ENCODE measurements at regions of chr1 and their contacts with region 1.

Region 1: DNA sequence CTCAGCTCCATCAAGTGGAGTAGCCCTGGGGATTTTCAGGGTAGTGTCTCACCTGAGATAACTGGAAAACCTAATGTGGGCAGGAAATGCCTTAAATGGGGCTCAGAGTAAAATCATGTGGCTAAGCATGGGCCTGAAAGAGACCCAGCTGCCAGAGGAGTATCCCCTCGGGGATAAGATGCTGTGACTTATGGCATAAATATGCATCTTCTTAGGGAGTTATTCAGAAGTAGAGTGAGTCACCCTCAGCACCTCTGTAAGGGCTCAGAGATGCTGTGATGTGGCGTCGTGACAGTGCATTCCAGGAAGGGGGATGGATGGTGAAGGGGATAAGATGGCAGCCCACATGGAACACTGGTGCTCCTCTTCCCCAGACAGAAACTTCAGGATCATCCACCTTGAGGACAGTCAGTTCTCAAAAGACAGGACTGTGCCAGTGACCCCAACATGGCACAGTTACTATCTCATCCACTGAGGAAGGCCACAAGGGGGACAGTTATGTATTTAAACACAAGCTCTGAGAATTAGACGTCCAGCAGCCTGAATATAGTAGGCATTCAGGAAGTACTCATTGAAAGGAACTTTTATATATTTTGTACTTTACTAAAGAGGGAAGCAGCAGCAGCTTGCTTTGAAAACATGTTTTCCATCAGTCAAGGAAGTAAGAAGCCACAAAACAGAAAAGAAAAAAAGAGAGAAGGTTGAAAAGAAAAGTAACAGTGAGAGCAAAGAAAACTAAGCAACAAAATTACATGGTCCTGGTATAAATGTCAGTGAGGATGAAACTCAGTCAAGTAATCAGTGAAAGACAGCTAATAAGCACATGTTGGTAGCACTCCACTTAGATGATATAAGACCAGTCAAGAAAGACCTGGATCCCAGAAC is 8.3 kb downstream of the IL24 start:
- DNase-seq: peak; percentile 88
- H3K4me3 Mint-ChIP-seq: peak overlapping the region; percentile 40
- H3K27ac Mint-ChIP-seq: peak overlapping the region; percentile 96
- H3K4me1 Mint-ChIP-seq: peaks cover 88% of the 10 kb centered on the region
- H3K27me3 Mint-ChIP-seq: no peaks in the 10 kb centered on the region

Region 2: DNA sequence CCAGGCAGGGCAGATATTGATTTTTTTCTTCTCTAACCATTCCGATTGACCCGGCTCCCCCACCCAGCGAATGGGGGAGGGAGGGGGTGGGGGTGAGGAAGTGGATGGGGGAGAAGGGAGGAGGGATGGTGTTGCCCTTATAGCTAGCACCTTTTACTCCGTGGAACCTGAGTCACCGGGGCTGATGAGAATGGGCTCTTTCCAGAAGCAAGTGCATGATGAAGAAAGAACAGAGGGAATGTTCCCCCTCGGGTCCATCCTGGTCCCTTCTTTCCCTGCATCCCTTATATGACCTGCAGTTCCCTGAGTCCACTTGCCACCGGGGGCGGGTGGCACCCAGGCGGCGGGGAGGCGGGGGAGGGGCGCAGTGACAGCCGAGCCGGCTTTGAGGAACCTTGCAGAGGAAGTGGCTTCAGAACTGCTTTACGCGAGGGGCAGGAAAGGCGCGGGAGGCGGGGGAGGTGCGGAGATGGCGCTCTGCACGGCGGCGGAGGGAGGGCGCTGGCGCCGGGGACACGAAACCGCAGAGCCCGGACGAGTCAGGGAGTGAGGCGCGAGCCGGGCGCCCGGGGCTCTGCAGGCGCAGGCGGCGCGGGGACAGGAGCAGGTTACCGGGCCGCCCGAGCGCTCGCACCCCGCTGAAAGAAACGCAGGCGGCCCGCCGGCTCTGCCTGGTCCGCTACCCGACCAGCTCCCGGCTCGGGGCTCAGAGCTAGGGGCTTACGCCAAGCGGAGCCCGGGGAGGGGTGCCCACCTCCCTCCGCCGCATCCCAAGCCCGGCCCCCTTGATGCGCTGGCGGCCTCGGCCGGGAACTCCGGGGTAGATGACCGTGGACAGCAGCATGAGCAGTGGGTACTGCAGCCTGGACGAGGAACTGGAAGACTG is 348.5 kb before region 1 on chr1:
- CTCF ChIA-PET with region 1: no interaction called
- intact Hi-C with region 1: loop called (anchors 1 kb)
- DNase-seq: peak; percentile 92
- H3K4me3 Mint-ChIP-seq: peak overlapping the region; percentile 96
- H3K27ac Mint-ChIP-seq: peak overlapping the region; percentile 100
- H3K4me1 Mint-ChIP-seq: peaks cover 61% of the 10 kb centered on the region
- H3K27me3 Mint-ChIP-seq: no peaks in the 10 kb centered on the region

Region 3: GRCh38 chr1:206890690-206891089 is 14.8 kb before region 1 on chr1:
- CTCF ChIA-PET with region 1: interaction called, 5 read pairs
- intact Hi-C with region 1: loop called (anchors 2 kb)
- DNase-seq: no peak
- H3K4me3 Mint-ChIP-seq: no peak overlapping the region
- H3K27ac Mint-ChIP-seq: peak overlapping the region; percentile 64
- H3K4me1 Mint-ChIP-seq: peaks cover 68% of the 10 kb centered on the region
- H3K27me3 Mint-ChIP-seq: peaks cover 1% of the 10 kb centered on the region

Region 4: DNA sequence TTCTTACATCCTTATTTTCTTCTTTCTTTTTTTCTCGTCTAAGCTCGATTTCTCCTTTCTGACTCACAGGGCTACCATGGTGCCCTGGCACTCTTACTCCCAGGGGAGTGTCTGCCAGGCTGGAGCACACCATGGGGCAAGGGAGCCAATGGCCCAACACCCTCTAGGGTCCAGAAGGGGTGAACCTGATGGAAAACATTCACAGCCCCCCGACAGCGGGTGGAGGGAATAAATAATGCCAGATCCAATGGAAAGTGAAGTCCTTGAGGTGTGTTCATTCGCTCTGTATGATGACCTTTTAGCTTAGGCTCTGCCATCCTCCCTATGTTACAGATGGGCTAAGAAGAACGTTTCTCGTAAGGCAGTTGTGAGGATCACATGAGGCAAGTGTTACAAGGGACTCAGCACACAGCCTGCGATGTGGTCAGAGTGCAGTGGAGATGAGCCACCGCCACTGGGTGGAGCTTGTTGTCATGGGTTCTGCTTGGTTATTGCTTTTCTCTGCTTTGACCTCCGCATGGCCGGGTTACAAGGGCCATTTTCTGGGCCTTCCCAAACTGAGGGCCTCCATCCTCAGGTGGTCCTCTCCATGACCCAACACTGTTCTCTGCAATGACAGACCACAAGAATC is 19.7 kb after region 1 on chr1:
- CTCF ChIA-PET with region 1: interaction called, 9 read pairs
- intact Hi-C with region 1: loop called (anchors 1 kb)
- DNase-seq: peak; percentile 78
- H3K4me3 Mint-ChIP-seq: no peak overlapping the region
- H3K27ac Mint-ChIP-seq: no peak overlapping the region
- H3K4me1 Mint-ChIP-seq: peaks cover 24% of the 10 kb centered on the region
- H3K27me3 Mint-ChIP-seq: no peaks in the 10 kb centered on the region